Heart right ventricle (tissue), 16 donors: ENCODE measurements at regions of chr12 and their contacts with region 1.

Region 1: GRCh38 chr12:93908846-93909567 is 231.8 kb downstream of the CRADD start:
- DNase-seq: peak in 1 of 2 donors; percentile 24
- ATAC-seq: peak in 7 of 8 donors; percentile 42 to 92 (median 77)
- H3K4me3 ChIP-seq: no peak overlapping the region
- H3K27ac ChIP-seq: peak overlapping the region in 4 of 10 donors; percentile 5 to 72 (median 18)
- H3K4me1 ChIP-seq: peaks cover 0 to 18% (median 10%) of the 10 kb centered on the region in 9 donors
- H3K27me3 ChIP-seq: no peaks in the 10 kb centered on the region
- CTCF ChIP-seq: no peak

Region 2: DNA sequence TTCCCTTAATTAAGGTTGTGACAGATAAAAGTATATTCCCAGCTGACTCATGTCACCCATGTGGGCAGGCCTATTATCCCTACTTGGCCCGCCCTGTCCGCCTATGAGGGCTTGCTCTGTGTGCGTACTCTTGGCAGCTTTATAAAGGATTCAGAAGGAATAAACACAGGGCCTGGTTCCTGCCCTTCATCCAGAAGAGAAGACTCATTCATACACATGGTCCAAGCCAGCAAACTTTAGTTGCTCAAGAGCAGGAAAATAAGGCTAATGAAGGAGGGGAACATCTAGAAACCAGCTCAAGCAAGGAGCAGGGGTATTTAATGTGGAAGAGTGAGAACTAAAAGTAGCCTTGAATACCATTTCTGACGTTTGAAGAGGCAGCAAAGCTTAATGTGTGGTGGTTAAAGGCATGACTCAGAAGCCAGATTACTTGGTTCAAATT is 89.9 kb before region 1 on chr12:
- intact Hi-C with region 1: no loop called
- DNase-seq: peak; percentile 39 to 48
- ATAC-seq: peak; percentile 50 to 85 (median 74)
- H3K4me3 ChIP-seq: no peak overlapping the region
- H3K27ac ChIP-seq: peak overlapping the region; percentile 13 to 77 (median 74)
- H3K4me1 ChIP-seq: peaks cover 21 to 60% (median 48%) of the 10 kb centered on the region in 9 donors
- H3K27me3 ChIP-seq: no peaks in the 10 kb centered on the region
- CTCF ChIP-seq: no peak

Region 3: GRCh38 chr12:93946542-93947150 is 37.6 kb after region 1 on chr12:
- intact Hi-C with region 1: loop called in 2 of 10 experiments (anchors 5 kb)
- DNase-seq: no peak
- ATAC-seq: no peak
- H3K4me3 ChIP-seq: no peak overlapping the region
- H3K27ac ChIP-seq: no peak overlapping the region
- H3K4me1 ChIP-seq: no peaks in the 10 kb centered on the region
- H3K27me3 ChIP-seq: no peaks in the 10 kb centered on the region
- CTCF ChIP-seq: no peak

Region 4: GRCh38 chr12:93954166-93955112 is 45.4 kb after region 1 on chr12:
- intact Hi-C with region 1: loop called in 2 of 10 experiments (anchors 5 kb)
- DNase-seq: peak; percentile 12 to 28
- ATAC-seq: peak; percentile 81 to 96 (median 92)
- H3K4me3 ChIP-seq: no peak overlapping the region
- H3K27ac ChIP-seq: peak overlapping the region in 7 of 10 donors; percentile 29 to 77 (median 43)
- H3K4me1 ChIP-seq: peaks cover 0 to 6% (median 0%) of the 10 kb centered on the region in 9 donors
- H3K27me3 ChIP-seq: no peaks in the 10 kb centered on the region
- CTCF ChIP-seq: no peak